Activated T-helper 1 cell treated with anti-CD3 and anti-CD28 coated beads, Interleukin-12 subunit alpha, Interleukin-12 subunit beta, Interleukin-2, Interleukin-4 antibody, amounts not matched to agents 30 ng/mL and 10 ng/mL and 1 ng/mL, durations not matched to agents 14 hours and 24 hours and 36 hours (primary cell): ENCODE measurements at regions of chr2 and their contacts with region 1.

Region 1: DNA sequence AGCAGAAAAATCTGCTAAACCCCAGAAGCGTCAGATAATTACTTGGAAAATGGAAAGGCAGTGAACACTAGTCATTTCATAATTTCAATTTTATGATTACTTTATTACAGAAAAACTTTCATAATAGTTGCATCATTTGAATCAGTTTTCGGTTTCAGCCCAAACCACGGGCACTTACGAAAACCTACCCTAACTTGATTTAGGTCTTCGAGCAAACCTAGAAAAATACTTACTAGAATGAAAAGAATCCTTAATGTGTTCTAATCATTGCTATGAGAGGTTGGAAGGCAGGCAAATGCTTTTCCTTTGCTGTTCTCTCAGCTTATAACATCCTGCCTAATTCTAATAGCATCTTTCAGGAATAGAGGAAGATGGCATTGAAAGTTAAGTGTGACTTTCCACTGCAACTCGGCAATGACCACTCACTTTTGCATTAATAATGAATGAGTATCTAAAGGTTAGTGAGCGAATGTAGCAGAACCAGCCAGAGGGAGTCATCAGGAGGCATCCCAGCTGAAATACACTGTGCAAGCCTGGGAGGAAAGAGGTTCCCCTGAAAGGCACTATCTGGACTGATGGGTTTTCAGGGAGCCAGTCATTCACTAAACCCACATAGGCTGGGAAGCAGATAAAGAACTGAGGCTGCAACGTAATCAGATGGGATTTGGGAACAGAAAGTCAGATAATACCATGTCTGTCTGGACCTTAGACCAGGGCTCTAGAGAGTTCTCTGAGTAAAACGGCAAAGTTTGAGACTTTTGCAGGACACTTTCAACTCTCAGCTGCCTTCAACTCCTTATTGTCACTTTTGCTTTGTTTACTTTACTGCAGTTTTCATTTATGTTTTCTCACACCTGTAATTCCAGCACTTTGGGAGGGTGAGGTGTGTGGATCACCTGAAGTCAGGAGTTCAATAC is 520.8 kb downstream of the RNF144A start:
- DNase-seq: no peak
- H3K4me3 Mint-ChIP-seq: peak overlapping the region; percentile 54
- H3K27ac Mint-ChIP-seq: peak overlapping the region; percentile 88
- H3K4me1 Mint-ChIP-seq: peaks cover 86% of the 10 kb centered on the region
- H3K27me3 Mint-ChIP-seq: no peaks in the 10 kb centered on the region

Region 2: DNA sequence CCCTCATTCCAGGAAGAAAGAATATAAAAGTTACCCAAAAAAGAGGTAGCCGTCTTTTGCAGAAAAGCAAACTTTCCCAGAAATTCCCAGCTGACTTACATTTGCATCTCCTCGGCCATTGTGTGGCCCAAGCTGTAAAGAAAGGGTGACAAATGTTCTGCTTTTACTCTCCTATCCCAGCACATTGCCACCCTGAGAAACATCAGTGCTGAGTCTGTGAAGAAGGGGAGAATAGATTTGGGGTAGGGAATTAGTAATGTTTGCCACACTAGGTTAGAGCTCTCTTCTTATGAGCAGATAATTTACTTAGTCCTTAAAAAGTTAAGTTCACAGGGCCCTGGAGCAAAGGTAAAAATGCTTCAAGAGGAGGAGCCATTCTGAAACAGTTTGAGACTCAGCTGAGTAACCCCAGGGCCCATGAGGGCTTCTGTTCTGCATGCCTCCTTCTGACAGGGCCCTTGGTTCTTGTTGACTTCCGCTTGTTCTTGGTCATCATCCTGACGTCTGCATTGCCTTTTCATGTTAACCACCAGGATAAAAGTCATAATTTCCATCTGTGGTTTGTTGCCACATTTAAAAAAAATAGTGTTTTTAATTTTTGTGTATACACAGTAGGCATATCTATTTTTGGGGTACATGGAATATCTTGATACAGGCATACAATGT is 29.9 kb after region 1 on chr2:
- intact Hi-C with region 1: loop called (anchors 1 kb)
- DNase-seq: peak; percentile 44
- H3K4me3 Mint-ChIP-seq: peak overlapping the region; percentile 50
- H3K27ac Mint-ChIP-seq: peak overlapping the region; percentile 91
- H3K4me1 Mint-ChIP-seq: peaks cover 51% of the 10 kb centered on the region
- H3K27me3 Mint-ChIP-seq: no peaks in the 10 kb centered on the region

Region 3: DNA sequence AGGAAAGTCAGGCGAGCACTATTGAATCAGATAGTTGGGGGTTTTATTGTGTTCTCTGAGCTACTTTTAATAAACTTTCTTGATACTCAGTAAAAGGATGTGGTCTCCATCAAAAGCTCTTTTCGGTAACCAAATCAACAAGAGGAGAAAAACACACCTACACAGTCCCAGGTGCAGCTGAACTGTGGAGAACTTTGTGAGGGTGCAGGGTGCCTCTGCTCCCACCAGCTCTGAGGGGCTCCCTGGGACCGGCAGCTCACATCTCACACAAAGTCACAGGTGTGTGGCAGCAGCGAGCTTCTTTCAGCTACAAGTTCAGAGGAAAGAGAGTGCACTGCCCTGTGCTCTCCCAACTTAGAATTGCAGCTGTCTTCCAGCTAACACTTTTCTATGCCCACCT is 129.7 kb after region 1 on chr2:
- intact Hi-C with region 1: loop called (anchors 1 kb)
- DNase-seq: peak; percentile 47
- H3K4me3 Mint-ChIP-seq: peak overlapping the region; percentile 25
- H3K27ac Mint-ChIP-seq: peak overlapping the region; percentile 90
- H3K4me1 Mint-ChIP-seq: peaks cover 59% of the 10 kb centered on the region
- H3K27me3 Mint-ChIP-seq: no peaks in the 10 kb centered on the region

Region 4: GRCh38 chr2:7758073-7758759 is 320.2 kb after region 1 on chr2:
- intact Hi-C with region 1: loop called (anchors 2 kb)
- DNase-seq: no peak
- H3K4me3 Mint-ChIP-seq: no peak overlapping the region
- H3K27ac Mint-ChIP-seq: peak overlapping the region; percentile 76
- H3K4me1 Mint-ChIP-seq: peaks cover 22% of the 10 kb centered on the region
- H3K27me3 Mint-ChIP-seq: no peaks in the 10 kb centered on the region

Region 5: DNA sequence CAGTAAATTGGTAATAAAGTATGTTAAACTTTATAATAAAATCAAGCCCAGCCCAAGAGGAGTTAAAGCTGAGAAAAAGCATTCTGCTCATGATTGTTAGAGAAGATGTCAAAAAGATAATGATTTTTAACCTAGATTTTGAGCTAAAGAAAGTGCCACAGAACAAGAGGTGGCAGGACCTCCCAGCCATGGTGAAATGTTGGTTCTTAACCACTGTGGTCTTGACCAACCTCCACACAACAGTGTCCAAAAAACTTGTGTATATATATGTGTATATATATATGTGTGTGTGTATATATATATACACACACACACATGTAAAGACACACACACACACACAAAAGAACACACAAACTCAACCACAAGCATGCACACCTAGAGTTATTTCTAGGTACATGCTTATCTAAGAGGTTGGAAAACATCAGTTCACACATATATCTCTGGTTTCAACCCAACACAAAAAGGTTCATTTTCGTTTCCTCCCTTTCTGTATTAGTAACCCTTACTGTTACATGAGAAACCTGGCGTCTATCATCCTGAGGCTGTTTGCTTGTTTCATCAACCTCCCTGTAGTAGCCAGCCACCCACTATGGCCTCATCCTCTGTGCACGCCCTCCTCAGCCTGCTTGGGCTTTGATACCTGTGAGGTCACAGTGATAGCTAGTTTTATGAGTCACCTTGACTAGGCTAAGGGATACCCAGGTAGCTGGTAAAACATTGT is 612.0 kb after region 1 on chr2:
- intact Hi-C with region 1: loop called (anchors 1 kb)
- DNase-seq: peak; percentile 52
- H3K4me3 Mint-ChIP-seq: peak overlapping the region; percentile 43
- H3K27ac Mint-ChIP-seq: peak overlapping the region; percentile 93
- H3K4me1 Mint-ChIP-seq: peaks cover 48% of the 10 kb centered on the region
- H3K27me3 Mint-ChIP-seq: no peaks in the 10 kb centered on the region

Region 6: GRCh38 chr2:8477552-8478470 is 1039.8 kb after region 1 on chr2:
- intact Hi-C with region 1: loop called (anchors 5 kb)
- DNase-seq: no peak
- H3K4me3 Mint-ChIP-seq: peak overlapping the region; percentile 31
- H3K27ac Mint-ChIP-seq: peak overlapping the region; percentile 76
- H3K4me1 Mint-ChIP-seq: peaks cover 97% of the 10 kb centered on the region
- H3K27me3 Mint-ChIP-seq: no peaks in the 10 kb centered on the region